ENCODE measurements at regions of chr3 and their contacts with region 1.

Region 1: GRCh38 chr3:187139126-187139894 is at the start of gene RPL39L:
- DNase-seq: peak; percentile 87
- H3K4me3 ChIP-seq: peak within 1 kb of the TSS; percentile 44 to 67 (median 54)
- H3K27ac ChIP-seq: peak within 1 kb of the TSS; percentile 55
- H3K4me1 ChIP-seq: peaks cover 4% of the 10 kb centered on the region
- H3K27me3 ChIP-seq: peaks cover 0 to 6% of the 10 kb centered on the region in 2 experiments
- CTCF ChIP-seq: peak; percentile 95 to 97
- POLR2A ChIP-seq: peak; percentile 83
- total RNA-seq, gene RPL39L: 16.8 and 22.3 TPM in 2 replicates

Region 2: DNA sequence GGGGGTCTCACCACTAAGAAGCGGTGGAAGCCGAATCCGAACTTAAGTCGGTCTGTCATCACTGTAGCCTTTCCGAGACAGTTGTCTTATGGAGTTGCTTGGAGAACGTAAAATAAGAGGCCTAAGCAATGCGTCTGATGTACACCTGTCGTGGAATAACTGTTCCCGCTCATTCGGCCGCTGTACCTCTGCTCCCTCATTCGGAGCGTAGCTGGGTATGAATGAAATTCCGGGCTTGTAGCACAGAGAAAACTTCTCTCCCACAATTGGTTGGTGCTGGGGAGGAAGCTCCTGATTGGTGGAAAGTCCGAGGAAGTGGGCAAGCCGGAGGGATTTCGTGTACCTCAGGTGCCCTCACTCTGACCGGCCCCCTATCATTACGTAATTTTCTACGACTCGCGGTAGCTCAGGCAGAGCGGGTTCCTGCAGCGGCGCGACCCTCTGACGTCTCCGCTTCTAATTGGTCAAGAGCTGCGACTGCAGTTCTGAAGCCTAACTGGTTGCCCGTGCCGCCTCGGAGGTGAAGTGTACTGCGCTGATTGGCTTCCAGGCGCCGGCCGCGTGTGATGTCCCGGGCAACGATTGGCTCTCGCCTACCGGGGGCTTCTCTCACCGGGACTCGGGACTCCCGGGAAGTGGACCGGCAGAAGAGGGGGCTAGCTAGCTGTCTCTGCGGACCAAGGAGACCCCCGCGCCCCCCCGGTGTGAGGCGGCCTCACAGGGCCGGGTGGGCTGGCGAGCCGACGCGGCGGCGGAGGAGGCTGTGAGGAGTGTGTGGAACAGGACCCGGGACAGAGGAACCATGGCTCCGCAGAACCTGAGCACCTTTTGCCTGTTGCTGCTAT is 569.0 kb before region 1 on chr3 and contains the start of gene DNAJB11:
- CTCF ChIA-PET with region 1: no interaction called
- POLR2A ChIA-PET with region 1: no interaction called
- dilution Hi-C with region 1: no loop called
- intact Hi-C with region 1: loop called (anchors 2 kb)
- DNase-seq: peak; percentile 100
- H3K4me3 ChIP-seq: peak within 1 kb of the TSS; percentile 80 to 91 (median 90)
- H3K27ac ChIP-seq: peak within 1 kb of the TSS; percentile 67
- H3K4me1 ChIP-seq: peaks cover 18% of the 10 kb centered on the region
- H3K27me3 ChIP-seq: no peaks in the 10 kb centered on the region
- CTCF ChIP-seq: no peak
- POLR2A ChIP-seq: peak; percentile 87
- total RNA-seq, gene DNAJB11: 87.6 and 100 TPM in 2 replicates

Region 3: GRCh38 chr3:187101184-187102072 is 37.9 kb before region 1 on chr3:
- CTCF ChIA-PET with region 1: interaction called, 12 read pairs
- POLR2A ChIA-PET with region 1: no interaction called
- dilution Hi-C with region 1: no loop called
- intact Hi-C with region 1: no loop called
- DNase-seq: peak; percentile 90
- H3K4me3 ChIP-seq: peak overlapping the region; percentile 36 to 81 (median 71)
- H3K27ac ChIP-seq: peak overlapping the region; percentile 62
- H3K4me1 ChIP-seq: peaks cover 13% of the 10 kb centered on the region
- H3K27me3 ChIP-seq: no peaks in the 10 kb centered on the region
- CTCF ChIP-seq: no peak
- POLR2A ChIP-seq: no peak

Region 4: GRCh38 chr3:187120326-187120725 is 19.0 kb before region 1 on chr3:
- CTCF ChIA-PET with region 1: interaction called, 86 read pairs
- POLR2A ChIA-PET with region 1: no interaction called
- dilution Hi-C with region 1: no loop called
- intact Hi-C with region 1: no loop called
- DNase-seq: no peak
- H3K4me3 ChIP-seq: no peak overlapping the region
- H3K27ac ChIP-seq: no peak overlapping the region
- H3K4me1 ChIP-seq: no peaks in the 10 kb centered on the region
- H3K27me3 ChIP-seq: no peaks in the 10 kb centered on the region
- CTCF ChIP-seq: no peak
- POLR2A ChIP-seq: no peak

Region 5: DNA sequence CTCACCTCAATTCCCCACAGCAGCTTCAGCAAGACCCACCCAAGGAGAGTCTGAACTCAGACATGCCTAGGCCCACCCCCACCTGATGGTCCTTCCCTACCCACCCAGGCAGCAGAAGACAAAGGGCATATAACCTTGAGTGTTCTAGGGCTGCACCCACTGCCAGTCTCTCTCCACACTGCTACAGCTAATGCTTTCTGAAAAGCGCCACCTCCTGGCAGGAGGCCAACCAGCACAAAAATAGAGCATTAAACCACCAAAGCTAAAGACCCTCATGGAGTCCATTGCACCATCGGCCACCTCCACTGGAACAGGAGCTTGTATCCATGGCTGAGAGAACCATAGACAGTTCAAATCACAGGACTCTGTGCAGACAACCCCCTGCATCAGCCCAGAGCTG is 11.3 kb after region 1 on chr3:
- CTCF ChIA-PET with region 1: interaction called, 74 read pairs
- POLR2A ChIA-PET with region 1: interaction called, 3 read pairs
- dilution Hi-C with region 1: no loop called
- intact Hi-C with region 1: no loop called
- DNase-seq: peak; percentile 16
- H3K4me3 ChIP-seq: no peak overlapping the region
- H3K27ac ChIP-seq: no peak overlapping the region
- H3K4me1 ChIP-seq: no peaks in the 10 kb centered on the region
- H3K27me3 ChIP-seq: peaks cover 2 to 7% of the 10 kb centered on the region in 2 experiments
- CTCF ChIP-seq: peak; percentile 10 to 22
- POLR2A ChIP-seq: no peak

Region 6: GRCh38 chr3:187242435-187242834 is 103.1 kb after region 1 on chr3:
- CTCF ChIA-PET with region 1: no interaction called
- POLR2A ChIA-PET with region 1: no interaction called
- dilution Hi-C with region 1: no loop called
- intact Hi-C with region 1: no loop called
- DNase-seq: no peak
- H3K4me3 ChIP-seq: no peak overlapping the region
- H3K27ac ChIP-seq: no peak overlapping the region
- H3K4me1 ChIP-seq: no peaks in the 10 kb centered on the region
- H3K27me3 ChIP-seq: no peaks in the 10 kb centered on the region
- CTCF ChIP-seq: no peak
- POLR2A ChIP-seq: no peak

Measured in endothelial cell of umbilical vein (primary cell).